MCF 10A (cell line): ENCODE measurements at regions of chr1 and their contacts with region 1.

Region 1: GRCh38 chr1:117059678-117060440 is at the start of gene TTF2:
- DNase-seq: peak; percentile 100
- H3K4me3 Mint-ChIP-seq: no peak within 1 kb of the TSS
- H3K27ac Mint-ChIP-seq: no peak within 1 kb of the TSS
- H3K4me1 Mint-ChIP-seq: peaks cover 30% of the 10 kb centered on the region
- H3K27me3 Mint-ChIP-seq: no peaks in the 10 kb centered on the region
- CTCF ChIP-seq: no peak
- total RNA-seq, gene TTF2: 28.4 and 38.6 TPM in 2 replicates

Region 2: DNA sequence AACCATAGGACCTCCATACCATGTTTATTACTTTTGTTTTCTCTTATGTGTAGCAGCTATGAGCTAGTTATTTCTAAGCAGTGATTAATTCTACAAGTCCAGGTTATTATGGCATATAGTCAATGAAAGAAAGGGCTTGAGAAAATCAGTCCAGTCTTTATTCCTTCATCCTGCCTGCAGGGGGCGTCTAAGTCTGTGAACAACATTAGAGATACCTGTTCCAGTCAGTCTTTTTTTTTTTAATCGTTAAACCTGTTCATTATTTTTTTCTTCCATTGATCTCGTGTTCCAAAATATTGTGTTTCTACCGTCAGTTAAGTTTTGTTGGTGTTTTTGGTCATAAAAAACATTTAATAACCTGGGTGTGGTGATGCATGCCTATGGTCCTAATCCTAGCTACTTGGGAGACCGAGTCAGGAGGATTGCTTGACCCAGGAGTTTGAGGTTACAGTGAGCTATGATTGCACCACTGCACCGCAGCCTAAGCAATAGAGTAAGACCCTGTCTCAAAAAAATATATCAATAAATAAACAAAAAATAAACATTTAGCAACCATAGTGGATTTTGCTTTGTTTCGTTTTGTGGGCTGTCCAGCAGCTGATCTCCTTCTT is 335.0 kb before region 1 on chr1:
- CTCF ChIA-PET with region 1: interaction called, 11 read pairs
- POLR2A ChIA-PET with region 1: interaction called, 6 read pairs
- intact Hi-C with region 1: no loop called
- DNase-seq: peak; percentile 86
- H3K4me3 Mint-ChIP-seq: no peak overlapping the region
- H3K27ac Mint-ChIP-seq: no peak overlapping the region
- H3K4me1 Mint-ChIP-seq: peaks cover 7% of the 10 kb centered on the region
- H3K27me3 Mint-ChIP-seq: no peaks in the 10 kb centered on the region
- CTCF ChIP-seq: peak; percentile 69

Region 3: GRCh38 chr1:116853670-116854402 is 206.0 kb before region 1 on chr1:
- CTCF ChIA-PET with region 1: interaction called, 15 read pairs
- POLR2A ChIA-PET with region 1: interaction called, 22 read pairs
- intact Hi-C with region 1: loop called (anchors 1 kb)
- DNase-seq: peak; percentile 68
- H3K4me3 Mint-ChIP-seq: no peak overlapping the region
- H3K27ac Mint-ChIP-seq: peak overlapping the region; percentile 50
- H3K4me1 Mint-ChIP-seq: peaks cover 15% of the 10 kb centered on the region
- H3K27me3 Mint-ChIP-seq: no peaks in the 10 kb centered on the region
- CTCF ChIP-seq: no peak

Region 4: DNA sequence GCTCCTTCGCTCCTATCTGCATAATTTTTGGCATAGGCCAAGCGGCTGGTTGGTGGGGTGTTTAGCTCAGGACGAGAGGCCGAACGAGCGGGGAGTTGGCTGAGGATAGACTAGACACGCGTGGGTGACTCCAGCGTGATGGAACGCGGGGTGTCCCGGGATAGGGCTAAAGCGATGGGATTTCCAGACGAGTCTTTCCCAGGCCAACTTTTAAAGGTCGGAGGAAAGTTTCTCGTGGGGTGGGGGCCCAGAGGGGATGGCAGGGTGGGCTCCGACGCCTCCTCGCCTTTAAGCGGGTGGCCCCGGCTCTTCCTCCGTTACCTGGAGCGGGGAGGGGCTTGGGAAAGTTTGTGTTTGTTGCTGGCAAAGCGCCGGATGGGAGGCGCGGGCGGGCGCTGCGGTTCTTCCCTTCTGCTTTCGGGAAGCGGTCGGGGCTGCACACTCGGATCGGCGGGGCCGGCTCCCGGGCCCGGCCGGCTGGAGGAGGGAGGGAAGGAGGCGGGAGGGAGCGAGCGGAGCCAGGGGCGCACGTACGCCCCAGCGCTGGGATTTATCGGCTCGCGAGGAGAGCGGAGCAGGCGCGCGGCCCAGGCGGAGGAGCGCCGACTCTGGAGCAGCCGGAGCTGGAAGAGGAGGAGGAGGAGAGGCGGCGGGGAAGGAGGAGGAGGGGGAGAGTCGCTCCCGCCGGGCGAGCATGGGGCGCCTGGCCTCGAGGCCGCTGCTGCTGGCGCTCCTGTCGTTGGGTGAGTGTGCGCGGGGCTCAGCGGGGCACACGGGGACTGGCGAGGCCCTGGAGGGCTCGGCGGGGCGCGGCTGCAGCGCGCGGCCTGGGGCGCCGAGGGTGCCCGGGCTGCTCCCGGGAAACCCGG is 150.1 kb before region 1 on chr1 and contains the start of gene PTGFRN:
- CTCF ChIA-PET with region 1: no interaction called
- POLR2A ChIA-PET with region 1: interaction called, 21 read pairs
- intact Hi-C with region 1: loop called (anchors 10 kb)
- DNase-seq: peak; percentile 74
- H3K4me3 Mint-ChIP-seq: no peak within 1 kb of the TSS
- H3K27ac Mint-ChIP-seq: peak within 1 kb of the TSS; percentile 85
- H3K4me1 Mint-ChIP-seq: peaks cover 10% of the 10 kb centered on the region
- H3K27me3 Mint-ChIP-seq: no peaks in the 10 kb centered on the region
- CTCF ChIP-seq: no peak
- total RNA-seq, gene PTGFRN: 45.2 and 61.0 TPM in 2 replicates

Region 5: DNA sequence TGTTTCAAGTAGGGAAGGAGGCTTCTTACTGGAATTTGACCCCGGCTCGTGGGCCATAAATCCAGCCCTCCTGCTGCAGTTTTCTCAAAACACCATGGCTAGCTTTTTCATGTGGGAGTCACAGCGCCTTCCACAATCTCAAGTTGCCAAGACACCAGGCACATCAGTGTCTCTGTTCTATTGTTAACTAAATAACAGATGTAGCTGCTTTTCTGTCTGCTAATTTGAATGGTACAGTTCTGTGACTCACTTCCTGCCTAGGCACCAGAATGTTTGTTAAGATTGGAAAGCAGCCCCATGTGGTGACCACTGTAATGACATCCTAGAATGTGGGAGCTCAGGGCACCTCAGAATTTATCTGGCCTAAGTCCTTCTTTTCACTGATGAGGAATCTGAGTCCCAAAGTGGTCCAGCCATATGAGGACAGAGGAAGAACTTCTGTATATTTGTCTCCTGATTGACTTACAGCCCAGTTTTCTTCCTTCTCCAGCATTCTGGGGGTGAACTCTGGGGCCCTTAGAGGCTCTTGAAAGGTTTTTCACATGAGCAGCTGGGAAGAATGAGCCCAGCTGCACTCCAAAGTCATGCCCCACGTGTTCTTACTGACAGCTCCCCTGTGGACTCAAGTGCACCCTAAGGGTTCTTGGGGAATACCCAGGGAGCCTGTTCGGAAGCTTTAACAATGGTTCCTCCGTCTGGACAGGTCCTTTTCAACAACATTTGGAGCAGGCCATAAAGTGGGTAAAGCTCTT is 34.2 kb after region 1 on chr1:
- CTCF ChIA-PET with region 1: interaction called, 8 read pairs
- POLR2A ChIA-PET with region 1: interaction called, 13 read pairs
- intact Hi-C with region 1: no loop called
- DNase-seq: peak; percentile 78
- H3K4me3 Mint-ChIP-seq: no peak overlapping the region
- H3K27ac Mint-ChIP-seq: peak overlapping the region; percentile 93
- H3K4me1 Mint-ChIP-seq: peaks cover 36% of the 10 kb centered on the region
- H3K27me3 Mint-ChIP-seq: no peaks in the 10 kb centered on the region
- CTCF ChIP-seq: peak; percentile 40

Region 6: DNA sequence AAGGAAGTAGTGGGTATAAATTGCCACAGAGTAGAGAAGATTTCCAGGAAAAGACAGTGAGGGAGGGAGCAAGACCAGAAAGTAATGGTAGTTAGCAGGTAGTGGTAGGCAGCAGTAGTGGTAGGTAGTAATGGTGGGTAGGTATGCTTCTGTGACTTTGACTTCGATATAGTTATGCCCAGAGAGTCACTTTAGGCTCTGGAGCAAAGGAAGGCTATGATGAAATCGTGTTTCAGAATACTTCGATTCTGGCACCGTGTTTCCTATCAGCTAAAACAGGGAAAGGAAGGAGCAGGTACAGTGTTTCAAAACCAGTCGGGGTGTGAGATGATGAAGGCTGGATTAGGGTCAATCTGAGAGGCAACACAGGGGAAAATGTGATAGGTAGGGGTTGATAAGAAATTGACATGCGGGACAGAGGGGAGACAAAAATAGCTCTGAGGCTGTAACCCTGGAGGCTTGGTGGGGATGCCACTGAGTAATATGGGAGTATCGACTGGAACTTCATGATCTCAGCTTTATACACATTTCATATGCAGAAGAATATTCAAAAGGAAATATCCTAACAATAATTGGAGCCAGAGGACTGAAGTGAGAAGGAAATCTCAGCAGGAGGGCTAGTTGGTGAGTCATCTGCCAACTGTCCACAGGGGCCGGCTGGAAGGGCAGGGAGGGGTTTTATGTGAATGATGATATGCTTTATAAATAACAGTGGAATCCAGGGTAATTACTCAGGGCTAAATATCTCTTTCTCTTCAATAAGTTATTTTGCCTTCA is 86.9 kb after region 1 on chr1:
- CTCF ChIA-PET with region 1: no interaction called
- POLR2A ChIA-PET with region 1: no interaction called
- intact Hi-C with region 1: no loop called
- DNase-seq: peak; percentile 80
- H3K4me3 Mint-ChIP-seq: no peak overlapping the region
- H3K27ac Mint-ChIP-seq: peak overlapping the region; percentile 63
- H3K4me1 Mint-ChIP-seq: peaks cover 29% of the 10 kb centered on the region
- H3K27me3 Mint-ChIP-seq: no peaks in the 10 kb centered on the region
- CTCF ChIP-seq: no peak

Region 7: DNA sequence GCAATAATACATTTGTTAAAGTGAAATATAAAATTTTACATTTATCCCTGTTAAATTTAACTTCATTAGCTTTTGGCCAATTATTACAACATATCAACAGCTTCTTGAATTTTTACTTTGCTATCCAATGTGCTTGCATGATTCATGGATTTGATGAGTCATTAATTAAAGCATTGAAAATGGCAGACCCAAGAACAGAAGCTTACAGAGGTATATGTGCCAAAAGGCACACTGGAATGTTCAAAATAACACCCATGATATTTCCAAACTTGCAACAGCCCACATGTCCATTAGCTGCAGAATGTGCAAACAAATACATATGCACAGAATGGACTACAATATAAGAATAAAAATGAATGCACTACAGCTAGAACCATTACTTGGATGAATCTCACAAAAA is 231.0 kb after region 1 on chr1:
- CTCF ChIA-PET with region 1: interaction called, 110 read pairs
- POLR2A ChIA-PET with region 1: interaction called, 13 read pairs
- intact Hi-C with region 1: no loop called
- DNase-seq: peak; percentile 52
- H3K4me3 Mint-ChIP-seq: no peak overlapping the region
- H3K27ac Mint-ChIP-seq: no peak overlapping the region
- H3K4me1 Mint-ChIP-seq: peaks cover 4% of the 10 kb centered on the region
- H3K27me3 Mint-ChIP-seq: no peaks in the 10 kb centered on the region
- CTCF ChIP-seq: no peak

Region 8: DNA sequence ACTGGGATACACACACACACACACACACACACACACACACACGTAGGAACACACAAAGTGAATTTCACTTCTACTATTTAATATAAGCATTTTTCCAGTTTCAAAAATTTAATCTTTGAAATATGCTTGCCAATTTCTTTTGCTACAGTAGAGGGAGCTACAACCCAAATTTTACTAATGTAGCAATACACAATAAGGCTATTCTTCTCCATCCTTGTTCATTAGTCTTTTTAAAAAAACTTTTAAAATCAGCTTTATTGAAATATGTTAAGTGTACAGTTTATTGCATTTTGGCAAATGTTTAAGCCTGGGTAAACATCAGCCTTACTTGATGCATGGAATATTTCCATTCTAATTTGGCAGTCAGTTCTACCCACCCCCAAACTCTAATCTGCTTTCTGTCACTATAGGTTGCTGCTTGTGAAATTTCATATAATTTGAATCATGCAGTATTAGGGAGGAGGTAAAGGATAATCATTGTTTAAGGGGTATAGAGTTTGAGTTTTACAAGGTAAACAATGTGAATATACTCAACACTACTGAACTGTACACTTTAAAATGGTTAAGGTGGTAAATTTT is 453.0 kb after region 1 on chr1:
- CTCF ChIA-PET with region 1: no interaction called
- POLR2A ChIA-PET with region 1: no interaction called
- intact Hi-C with region 1: loop called (anchors 10 kb)
- DNase-seq: peak; percentile 32
- H3K4me3 Mint-ChIP-seq: no peak overlapping the region
- H3K27ac Mint-ChIP-seq: no peak overlapping the region
- H3K4me1 Mint-ChIP-seq: no peaks in the 10 kb centered on the region
- H3K27me3 Mint-ChIP-seq: no peaks in the 10 kb centered on the region
- CTCF ChIP-seq: peak; percentile 53